Posterior cingulate gyrus (tissue), 11 donors: ENCODE measurements at regions of chr21 and their contacts with region 1.

Region 1: DNA sequence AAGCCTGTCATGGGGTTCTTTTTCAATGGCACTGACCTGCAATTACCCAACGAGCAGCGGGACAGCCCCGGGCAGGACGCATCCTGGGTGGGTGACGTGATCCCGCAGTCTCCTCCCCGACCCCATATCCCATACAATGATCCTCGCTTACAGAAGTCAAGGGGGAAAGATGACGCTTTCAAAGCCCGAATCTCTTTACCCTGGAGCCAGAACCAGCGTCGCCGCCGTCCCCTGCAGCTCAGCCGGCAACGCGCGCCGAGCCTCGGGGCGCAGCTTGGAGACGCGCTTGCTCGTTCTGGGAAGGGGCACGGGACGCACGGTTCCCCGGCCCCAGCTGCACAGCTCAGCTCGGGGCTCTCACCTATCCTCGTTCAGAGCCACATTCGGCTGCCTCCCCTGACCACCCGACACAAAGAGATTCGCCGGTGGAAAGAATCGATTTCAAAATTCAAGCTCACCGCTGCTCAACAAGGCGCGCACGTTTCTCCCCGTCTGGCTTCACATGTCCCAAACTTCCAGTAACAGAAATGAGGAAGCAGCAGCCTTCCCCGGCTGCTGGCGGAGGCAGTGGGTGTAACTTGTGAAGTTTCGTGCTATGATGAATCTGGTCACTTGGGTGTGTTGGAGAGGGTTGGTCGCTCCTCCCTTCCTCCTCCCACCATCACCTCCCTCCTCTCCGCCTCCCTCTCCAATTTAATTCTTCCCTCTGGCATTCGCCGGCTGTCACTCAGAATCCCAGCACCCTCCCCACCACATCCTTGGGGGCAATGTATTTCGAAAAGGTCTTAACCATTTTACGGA is at the start of gene TIAM1:
- DNase-seq: peak; percentile 33 to 93 (median 54)

Region 2: GRCh38 chr21:31136891-31137290 is 207.0 kb before region 1 on chr21:
- intact Hi-C with region 1: no loop called
- DNase-seq: peak in 4 of 10 donors; percentile 39 to 86 (median 62)

Region 3: GRCh38 chr21:31220573-31220972 is 123.3 kb before region 1 on chr21:
- intact Hi-C with region 1: loop called (anchors 10 kb)
- DNase-seq: peak in 2 of 10 donors; percentile 11 to 23

Region 4: GRCh38 chr21:31265366-31266013 is 78.4 kb before region 1 on chr21:
- intact Hi-C with region 1: no loop called
- DNase-seq: peak in 2 of 10 donors; percentile 30 to 82

Region 5: DNA sequence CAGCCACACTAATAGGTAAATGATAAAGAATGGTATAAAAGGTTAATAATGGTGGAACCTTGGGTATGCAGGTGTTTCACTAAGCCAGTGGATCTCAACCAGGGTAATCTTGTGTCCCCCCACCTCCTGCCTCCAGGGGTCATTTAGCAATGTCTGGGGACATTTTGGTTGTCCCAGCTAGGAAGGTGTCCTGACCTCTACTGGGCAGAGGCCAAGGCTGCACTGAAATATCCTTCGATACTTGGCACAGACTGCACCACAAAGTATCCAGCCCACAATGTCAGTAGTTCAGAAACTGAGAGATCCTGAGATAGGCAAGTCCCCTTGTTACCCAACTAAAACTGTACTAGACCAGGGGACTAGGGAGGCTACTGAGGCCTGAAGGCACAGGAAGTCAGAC is 113.8 kb after region 1 on chr21:
- intact Hi-C with region 1: loop called (anchors 10 kb)
- DNase-seq: no peak

Region 6: GRCh38 chr21:31558962-31559367 is 215.1 kb after region 1 on chr21:
- intact Hi-C with region 1: loop called (anchors 5 kb)
- DNase-seq: peak; percentile 94 to 99 (median 96)